A549 (cell line): ENCODE measurements at regions of chr14 and their contacts with region 1.

Region 1: GRCh38 chr14:102524466-102525218 is 15.1 kb upstream of the ANKRD9 start:
- DNase-seq: peak; percentile 99
- ATAC-seq: peak; percentile 94 to 97
- H3K4me3 ChIP-seq: peak overlapping the region; percentile 51
- H3K27ac ChIP-seq: peak overlapping the region; percentile 85 to 88
- H3K4me1 ChIP-seq: peaks cover 32% of the 10 kb centered on the region
- CTCF ChIP-seq: peak; percentile 96
- EP300 ChIP-seq: no peak
- POLR2A ChIP-seq: peak; percentile 94
- RAD21 ChIP-seq: peak; percentile 85 to 89

Region 2: GRCh38 chr14:102508774-102509743 is 15.6 kb before region 1 on chr14:
- CTCF ChIA-PET with region 1: interaction called, 12 read pairs
- POLR2A ChIA-PET with region 1: interaction called, 6 read pairs
- DNase-seq: peak in 1 of 2 experiments; percentile 40
- ATAC-seq: peak; percentile 12 to 30
- H3K4me3 ChIP-seq: peak overlapping the region; percentile 89
- H3K27ac ChIP-seq: peak overlapping the region; percentile 84 to 94
- H3K4me1 ChIP-seq: peaks cover 23% of the 10 kb centered on the region
- CTCF ChIP-seq: no peak
- EP300 ChIP-seq: no peak
- POLR2A ChIP-seq: no peak
- RAD21 ChIP-seq: no peak

Region 3: DNA sequence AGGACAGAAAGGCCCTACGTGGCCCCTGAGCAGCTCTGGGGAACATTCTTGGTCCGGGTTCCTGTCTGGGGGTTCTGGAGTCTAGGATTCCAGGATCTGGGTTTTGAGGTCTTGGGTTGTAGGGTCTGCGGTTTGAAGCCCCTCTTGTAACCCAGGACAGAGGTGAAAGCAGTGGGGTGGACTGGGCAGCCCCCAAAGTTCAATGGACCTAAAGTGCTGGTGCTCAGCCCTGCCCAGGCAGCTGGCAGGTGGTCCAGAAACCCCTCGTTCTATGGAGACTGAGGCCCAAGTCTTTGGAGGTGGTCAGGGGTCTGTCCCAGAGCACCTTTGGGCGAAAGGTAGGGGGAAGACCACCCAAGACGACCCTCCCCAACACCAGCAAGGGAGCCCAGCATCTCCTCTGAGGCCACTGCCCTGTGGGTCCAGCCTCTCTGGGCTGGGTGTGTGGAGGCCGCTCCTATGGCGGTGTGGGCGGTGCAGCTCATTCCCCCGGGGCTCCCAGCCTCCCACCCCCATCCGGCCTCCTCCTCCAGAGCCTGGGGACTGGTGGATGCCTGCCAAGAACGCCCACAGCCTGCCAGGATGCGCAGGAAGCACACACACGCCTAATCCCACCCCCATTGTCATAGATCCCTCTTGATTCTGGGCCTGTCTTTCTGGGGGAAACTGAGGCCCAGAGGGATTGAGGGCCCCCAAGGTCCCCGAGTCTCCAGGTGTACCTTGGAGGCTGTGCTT is 15.1 kb after region 1 on chr14:
- CTCF ChIA-PET with region 1: interaction called, 22 read pairs
- POLR2A ChIA-PET with region 1: interaction called, 3 read pairs
- DNase-seq: no peak
- ATAC-seq: no peak
- H3K4me3 ChIP-seq: no peak overlapping the region
- H3K27ac ChIP-seq: peak overlapping the region in 1 of 2 experiments; percentile 48; a peak in 2 of 6 replicates
- H3K4me1 ChIP-seq: peaks cover 27% of the 10 kb centered on the region; the same call in 2 of the 3 replicates
- CTCF ChIP-seq: no peak
- EP300 ChIP-seq: no peak
- POLR2A ChIP-seq: no peak
- RAD21 ChIP-seq: no peak

Region 4: GRCh38 chr14:102571043-102571442 is 46.4 kb after region 1 on chr14:
- CTCF ChIA-PET with region 1: interaction called, 12 read pairs
- POLR2A ChIA-PET with region 1: interaction called, 4 read pairs
- DNase-seq: no peak
- ATAC-seq: no peak
- H3K4me3 ChIP-seq: no peak overlapping the region
- H3K27ac ChIP-seq: no peak overlapping the region
- H3K4me1 ChIP-seq: peaks cover 12% of the 10 kb centered on the region
- CTCF ChIP-seq: no peak
- EP300 ChIP-seq: no peak
- POLR2A ChIP-seq: no peak
- RAD21 ChIP-seq: no peak